ENCODE measurements at regions of chr1 and their contacts with region 1.

Region 1: GRCh38 chr1:8702850-8703810 is 114.3 kb downstream of the RERE start:
- DNase-seq: peak; percentile 92
- H3K4me3 Mint-ChIP-seq: peak overlapping the region; percentile 89
- H3K27ac Mint-ChIP-seq: peak overlapping the region; percentile 84
- H3K4me1 Mint-ChIP-seq: peaks cover 40% of the 10 kb centered on the region
- H3K27me3 Mint-ChIP-seq: peaks cover 5% of the 10 kb centered on the region

Region 2: DNA sequence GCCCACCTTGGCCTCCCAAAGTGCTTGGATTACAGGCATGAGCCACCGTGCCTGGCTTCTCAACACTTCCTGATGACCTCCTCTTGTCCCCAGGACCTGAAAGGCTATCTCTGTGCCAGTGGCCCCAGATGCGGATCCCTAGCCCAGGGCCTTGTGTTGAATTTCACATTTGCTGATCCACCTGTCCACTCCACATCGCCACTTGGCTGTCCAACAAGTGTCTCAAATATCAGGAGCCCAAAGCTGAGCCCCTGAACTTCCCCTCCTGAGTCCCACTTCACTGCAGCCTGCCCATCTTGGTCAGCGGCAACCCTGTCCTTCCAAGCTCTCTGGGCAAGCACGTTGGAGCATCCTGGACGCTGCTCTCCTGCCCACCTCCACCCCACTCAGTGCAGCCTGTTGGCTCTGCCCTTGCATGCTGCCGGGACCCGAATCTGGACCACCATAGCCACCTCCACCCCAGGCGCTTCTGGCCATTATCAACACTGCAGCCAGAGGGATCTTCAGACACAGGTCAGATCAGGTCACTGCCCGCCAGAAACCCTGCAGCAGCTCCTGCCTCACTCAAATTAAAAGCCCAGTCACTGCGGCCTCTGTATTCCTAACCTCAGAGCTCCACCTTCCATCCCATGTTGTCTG is 1284.6 kb before region 1 on chr1:
- intact Hi-C with region 1: no loop called
- DNase-seq: peak; percentile 37
- H3K4me3 Mint-ChIP-seq: no peak overlapping the region
- H3K27ac Mint-ChIP-seq: no peak overlapping the region
- H3K4me1 Mint-ChIP-seq: no peaks in the 10 kb centered on the region
- H3K27me3 Mint-ChIP-seq: no peaks in the 10 kb centered on the region

Region 3: DNA sequence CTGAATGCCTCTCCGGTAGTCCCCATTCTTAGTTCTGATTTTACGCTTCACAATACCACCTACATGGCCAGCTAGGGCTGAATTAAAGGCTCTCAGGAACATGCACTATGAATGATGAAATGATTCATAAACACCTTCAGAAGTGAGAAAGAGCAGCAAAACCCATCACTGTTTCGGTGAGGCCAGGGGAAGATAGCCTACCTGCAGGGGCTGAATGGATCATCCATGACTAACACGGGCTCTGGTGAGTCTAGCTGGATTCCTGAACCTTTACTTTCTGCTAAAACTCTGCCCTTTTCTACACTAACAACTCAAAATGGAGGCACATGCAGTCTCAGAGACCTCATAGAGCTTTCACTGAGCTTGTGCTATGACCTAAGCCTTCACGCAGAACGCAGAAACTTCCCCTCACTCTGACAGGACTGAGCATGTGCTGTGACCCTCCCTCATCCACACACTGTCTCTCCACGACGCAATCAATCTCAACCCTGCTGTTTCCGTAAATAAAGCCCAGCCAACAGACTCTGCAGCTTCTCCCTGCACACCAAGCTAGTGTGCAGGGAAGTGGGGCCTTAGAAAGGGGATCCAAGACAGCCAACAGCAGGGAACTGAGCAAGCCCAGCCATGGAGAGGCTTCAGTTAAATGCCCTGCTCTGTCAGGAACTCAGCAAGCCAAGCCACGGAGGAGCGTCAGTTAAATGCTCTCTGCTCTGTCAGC is 177.4 kb before region 1 on chr1:
- intact Hi-C with region 1: loop called (anchors 1 kb)
- DNase-seq: peak; percentile 92
- H3K4me3 Mint-ChIP-seq: no peak overlapping the region
- H3K27ac Mint-ChIP-seq: no peak overlapping the region
- H3K4me1 Mint-ChIP-seq: peaks cover 38% of the 10 kb centered on the region
- H3K27me3 Mint-ChIP-seq: no peaks in the 10 kb centered on the region

Region 4: GRCh38 chr1:8568837-8569236 is 134.3 kb before region 1 on chr1:
- intact Hi-C with region 1: no loop called
- DNase-seq: no peak
- H3K4me3 Mint-ChIP-seq: no peak overlapping the region
- H3K27ac Mint-ChIP-seq: no peak overlapping the region
- H3K4me1 Mint-ChIP-seq: peaks cover 7% of the 10 kb centered on the region
- H3K27me3 Mint-ChIP-seq: no peaks in the 10 kb centered on the region

Region 5: GRCh38 chr1:8604041-8604945 is 98.8 kb before region 1 on chr1:
- intact Hi-C with region 1: loop called (anchors 1 kb)
- DNase-seq: peak; percentile 85
- H3K4me3 Mint-ChIP-seq: peak overlapping the region; percentile 75
- H3K27ac Mint-ChIP-seq: peak overlapping the region; percentile 93
- H3K4me1 Mint-ChIP-seq: peaks cover 33% of the 10 kb centered on the region
- H3K27me3 Mint-ChIP-seq: no peaks in the 10 kb centered on the region

Region 6: GRCh38 chr1:8679395-8679800 is 23.7 kb before region 1 on chr1:
- intact Hi-C with region 1: loop called (anchors 2 kb)
- DNase-seq: peak; percentile 39
- H3K4me3 Mint-ChIP-seq: no peak overlapping the region
- H3K27ac Mint-ChIP-seq: no peak overlapping the region
- H3K4me1 Mint-ChIP-seq: peaks cover 31% of the 10 kb centered on the region
- H3K27me3 Mint-ChIP-seq: no peaks in the 10 kb centered on the region

Region 7: GRCh38 chr1:8718850-8719361 is 15.8 kb after region 1 on chr1:
- intact Hi-C with region 1: no loop called
- DNase-seq: no peak
- H3K4me3 Mint-ChIP-seq: no peak overlapping the region
- H3K27ac Mint-ChIP-seq: no peak overlapping the region
- H3K4me1 Mint-ChIP-seq: peaks cover 34% of the 10 kb centered on the region
- H3K27me3 Mint-ChIP-seq: no peaks in the 10 kb centered on the region

Region 8: GRCh38 chr1:8817406-8818324 is 114.5 kb after region 1 on chr1 and contains the start of gene RERE:
- intact Hi-C with region 1: loop called (anchors 5 kb)
- DNase-seq: peak; percentile 99
- H3K4me3 Mint-ChIP-seq: peak within 1 kb of the TSS; percentile 96
- H3K27ac Mint-ChIP-seq: peak within 1 kb of the TSS; percentile 92
- H3K4me1 Mint-ChIP-seq: peaks cover 37% of the 10 kb centered on the region
- H3K27me3 Mint-ChIP-seq: peaks cover 7% of the 10 kb centered on the region
- total RNA-seq, gene RERE: 69.3 and 85.6 TPM in 2 replicates

Region 9: GRCh38 chr1:8903908-8904650 is 200.9 kb after region 1 on chr1:
- intact Hi-C with region 1: loop called (anchors 2 kb)
- DNase-seq: no peak
- H3K4me3 Mint-ChIP-seq: no peak overlapping the region
- H3K27ac Mint-ChIP-seq: peak overlapping the region; percentile 83
- H3K4me1 Mint-ChIP-seq: peaks cover 46% of the 10 kb centered on the region
- H3K27me3 Mint-ChIP-seq: no peaks in the 10 kb centered on the region